ENCODE measurements at regions of chr4 and their contacts with region 1.

Region 1: GRCh38 chr4:56435306-56435926 is at the start of gene PPAT:
- DNase-seq: peak; percentile 91 to 96
- H3K4me3 ChIP-seq: peak within 1 kb of the TSS; percentile 98
- H3K27ac ChIP-seq: peak within 1 kb of the TSS; percentile 82
- H3K4me1 ChIP-seq: peaks cover 18% of the 10 kb centered on the region; the same call in 1 of the 2 replicates
- H3K27me3 ChIP-seq: no peaks in the 10 kb centered on the region
- CTCF ChIP-seq: peak; percentile 30; the same call in 1 of the 2 replicates
- total RNA-seq, gene PPAT: 21.3 and 22.5 TPM in 2 replicates

Region 2: DNA sequence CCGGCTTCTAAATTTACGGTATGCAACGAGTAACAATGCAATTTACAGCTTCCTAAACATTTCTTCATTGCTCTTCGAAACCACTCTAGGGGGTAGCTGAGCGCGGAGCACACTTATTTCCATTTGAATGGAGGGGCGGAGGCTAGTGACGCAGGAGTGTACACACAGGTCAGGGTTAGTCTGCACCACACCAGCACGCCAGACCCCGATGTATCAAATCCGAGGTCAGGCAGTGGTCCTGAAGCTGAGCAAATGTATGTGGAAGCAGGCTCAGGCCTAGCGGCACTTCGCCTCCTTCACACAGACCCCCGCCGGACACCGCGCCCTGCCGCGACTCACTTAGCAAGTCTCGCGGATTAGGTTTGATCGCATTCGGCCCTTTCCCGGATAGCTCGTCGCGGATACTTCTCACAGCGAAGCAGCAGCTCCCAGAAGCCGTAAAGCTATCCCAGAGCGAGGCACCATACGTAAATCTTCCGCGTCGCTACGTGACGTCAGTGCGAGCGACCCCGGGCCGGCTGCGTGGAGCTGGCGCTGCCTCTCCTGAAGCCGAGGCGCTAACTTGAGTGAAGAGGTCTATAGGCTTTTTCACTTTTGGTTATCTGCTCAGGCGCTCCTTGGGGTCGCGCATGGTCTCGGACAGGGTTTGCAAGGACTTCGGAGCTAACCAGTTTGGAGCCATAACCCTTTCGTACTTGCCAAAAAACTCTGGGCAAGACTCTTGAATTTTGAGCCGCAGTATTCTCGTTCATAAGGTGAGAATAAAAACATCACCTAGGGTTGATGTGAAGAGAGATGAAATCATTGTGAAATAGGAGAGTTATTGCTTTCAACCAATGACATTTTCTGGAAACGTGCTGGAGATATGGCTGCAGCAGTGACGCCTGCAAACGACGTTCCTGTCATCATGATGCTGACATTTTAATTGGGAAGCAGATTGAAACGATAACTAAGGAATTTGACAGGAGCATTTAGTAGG is 48.1 kb before region 1 on chr4 and contains the start of gene AASDH:
- CTCF ChIA-PET with region 1: no interaction called
- POLR2A ChIA-PET with region 1: interaction called, 13 read pairs
- intact Hi-C with region 1: loop called (anchors 2 kb)
- DNase-seq: peak; percentile 84 to 87
- H3K4me3 ChIP-seq: peak within 1 kb of the TSS; percentile 91
- H3K27ac ChIP-seq: peak within 1 kb of the TSS; percentile 78
- H3K4me1 ChIP-seq: peaks cover 5% of the 10 kb centered on the region; the same call in 1 of the 2 replicates
- H3K27me3 ChIP-seq: no peaks in the 10 kb centered on the region
- CTCF ChIP-seq: no peak
- total RNA-seq, gene AASDH: 10.2 and 11.5 TPM in 2 replicates

Region 3: GRCh38 chr4:56410235-56411062 is 25.0 kb before region 1 on chr4:
- CTCF ChIA-PET with region 1: no interaction called
- POLR2A ChIA-PET with region 1: interaction called, 5 read pairs
- intact Hi-C with region 1: loop called (anchors 2 kb)
- DNase-seq: peak; percentile 51 to 93
- H3K4me3 ChIP-seq: peak overlapping the region; percentile 48; the same call in 1 of the 2 replicates
- H3K27ac ChIP-seq: peak overlapping the region; percentile 69
- H3K4me1 ChIP-seq: peaks cover 29% of the 10 kb centered on the region
- H3K27me3 ChIP-seq: no peaks in the 10 kb centered on the region
- CTCF ChIP-seq: no peak

Region 4: GRCh38 chr4:56467284-56468096 is 32.1 kb after region 1 on chr4 and contains the start of gene SRP72:
- CTCF ChIA-PET with region 1: no interaction called
- POLR2A ChIA-PET with region 1: interaction called, 12 read pairs
- intact Hi-C with region 1: no loop called
- DNase-seq: peak; percentile 79 to 83
- H3K4me3 ChIP-seq: peak within 1 kb of the TSS; percentile 96
- H3K27ac ChIP-seq: peak within 1 kb of the TSS; percentile 98
- H3K4me1 ChIP-seq: peaks cover 26% of the 10 kb centered on the region
- H3K27me3 ChIP-seq: no peaks in the 10 kb centered on the region
- CTCF ChIP-seq: no peak
- total RNA-seq, gene SRP72: 72.8 and 92.4 TPM in 2 replicates

Measured in PC-9 (cell line).